ENCODE measurements at regions of chr17 and their contacts with region 1.

Region 1: DNA sequence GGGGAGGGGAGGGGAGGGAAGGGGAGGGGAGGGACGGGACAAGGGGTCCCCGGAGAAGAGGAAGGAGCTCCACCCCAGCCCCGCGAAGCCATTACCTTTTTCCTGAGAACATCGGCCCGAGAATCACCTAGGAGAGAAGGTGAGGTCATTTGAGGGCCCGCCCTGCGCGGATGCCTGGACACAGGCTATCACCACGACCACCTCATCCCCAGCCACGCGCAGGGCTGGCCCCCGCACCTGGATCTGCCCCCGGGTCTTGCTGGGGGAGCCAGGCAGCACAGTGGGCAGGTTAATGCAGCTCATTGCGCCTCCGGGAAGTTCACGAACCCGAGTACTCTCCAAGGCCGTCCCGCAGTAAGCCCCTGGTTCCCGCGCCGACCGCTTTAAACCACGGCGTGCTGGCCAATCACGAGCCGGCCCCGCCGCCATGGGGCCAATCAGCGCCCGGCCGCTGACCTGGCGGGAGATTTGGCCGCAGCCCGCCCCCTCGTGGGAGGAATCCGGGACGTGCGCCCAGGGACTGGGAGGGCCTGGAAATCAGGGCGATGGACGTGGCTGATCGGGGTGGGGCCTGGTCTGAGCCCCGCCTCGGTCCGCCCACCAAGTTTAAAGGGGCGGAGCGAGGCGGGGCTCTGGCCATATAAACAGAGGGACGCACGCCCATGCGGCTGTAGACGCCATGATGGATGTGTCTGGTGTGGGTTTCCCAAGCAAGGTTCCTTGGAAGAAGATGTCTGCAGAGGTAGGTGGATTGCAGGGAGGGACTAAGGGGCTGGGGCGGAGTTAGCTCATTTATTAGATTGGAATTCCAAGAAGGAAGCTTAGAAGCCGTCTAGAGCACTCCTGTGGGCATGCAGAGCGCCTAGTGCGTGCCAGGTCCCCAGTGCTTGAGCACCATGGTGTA is at the starts of genes AFMID and TK1:
- DNase-seq: peak; percentile 100

Region 2: DNA sequence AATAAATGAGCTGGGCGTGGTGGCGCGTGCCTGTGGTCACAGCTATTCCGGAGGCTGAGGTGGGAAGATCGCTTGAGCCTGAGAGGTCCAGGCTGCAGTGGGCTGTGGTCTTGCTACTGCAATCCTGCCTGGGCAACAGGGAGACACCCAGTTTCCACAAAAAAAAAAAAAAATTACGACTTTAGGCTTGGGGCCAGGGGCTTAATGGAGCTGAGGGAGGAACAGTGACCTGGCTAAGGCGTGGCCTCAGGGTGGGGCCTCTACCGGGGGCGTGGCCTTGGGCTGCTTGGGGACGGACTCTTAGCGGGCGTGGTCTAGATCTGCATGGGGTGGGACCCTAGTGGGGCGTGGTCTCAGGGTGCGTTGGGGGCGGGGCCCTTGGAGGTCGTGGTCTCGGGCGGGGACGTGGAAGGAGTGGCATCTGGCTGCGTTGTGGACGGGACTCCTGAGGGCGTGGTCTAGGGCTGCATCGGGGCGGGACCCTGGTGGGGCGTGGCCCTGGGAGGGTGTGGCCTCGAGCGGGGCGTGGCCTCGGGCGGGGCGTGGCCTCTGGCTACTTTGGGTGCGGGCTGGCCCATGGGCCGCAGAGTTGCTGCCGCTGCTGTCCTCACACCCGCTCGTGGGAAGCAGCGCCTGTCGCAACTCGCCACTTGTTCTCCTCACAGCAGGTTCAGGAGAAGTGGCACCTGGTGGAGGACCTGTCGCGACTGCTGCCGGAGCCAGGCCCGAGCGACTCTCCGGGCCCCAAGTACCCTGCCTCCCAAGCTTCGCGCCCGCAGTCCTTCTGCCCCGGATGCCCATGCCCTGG is 46.6 kb before region 1 on chr17:
- CTCF ChIA-PET with region 1: interaction called, 8 read pairs
- POLR2A ChIA-PET with region 1: interaction called, 19 read pairs
- DNase-seq: peak; percentile 100

Region 3: GRCh38 chr17:78176548-78177025 is 10.4 kb before region 1 on chr17:
- CTCF ChIA-PET with region 1: interaction called, 20 read pairs
- POLR2A ChIA-PET with region 1: interaction called, 31 read pairs
- DNase-seq: peak; percentile 82

Region 4: DNA sequence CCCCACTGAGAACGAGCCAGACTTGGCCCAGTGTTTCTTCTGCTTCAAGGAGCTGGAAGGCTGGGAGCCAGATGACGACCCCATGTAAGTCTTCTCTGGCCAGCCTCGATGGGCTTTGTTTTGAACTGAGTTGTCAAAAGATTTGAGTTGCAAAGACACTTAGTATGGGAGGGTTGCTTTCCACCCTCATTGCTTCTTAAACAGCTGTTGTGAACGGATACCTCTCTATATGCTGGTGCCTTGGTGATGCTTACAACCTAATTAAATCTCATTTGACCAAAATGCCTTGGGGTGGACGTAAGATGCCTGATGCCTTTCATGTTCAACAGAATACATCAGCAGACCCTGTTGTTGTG is 27.7 kb after region 1 on chr17:
- CTCF ChIA-PET with region 1: interaction called, 3 read pairs
- POLR2A ChIA-PET with region 1: interaction called, 26 read pairs
- DNase-seq: no peak